ENCODE measurements at regions of chr3 and their contacts with region 1.

Region 1: GRCh38 chr3:56556908-56557830 is at the start of gene CCDC66:
- DNase-seq: peak; percentile 96
- H3K4me3 Mint-ChIP-seq: peak within 1 kb of the TSS; percentile 87
- H3K27ac Mint-ChIP-seq: peak within 1 kb of the TSS; percentile 92
- H3K4me1 Mint-ChIP-seq: peaks cover 24% of the 10 kb centered on the region
- H3K27me3 Mint-ChIP-seq: no peaks in the 10 kb centered on the region
- total RNA-seq, gene CCDC66: 21.0 to 29.4 TPM

Region 2: DNA sequence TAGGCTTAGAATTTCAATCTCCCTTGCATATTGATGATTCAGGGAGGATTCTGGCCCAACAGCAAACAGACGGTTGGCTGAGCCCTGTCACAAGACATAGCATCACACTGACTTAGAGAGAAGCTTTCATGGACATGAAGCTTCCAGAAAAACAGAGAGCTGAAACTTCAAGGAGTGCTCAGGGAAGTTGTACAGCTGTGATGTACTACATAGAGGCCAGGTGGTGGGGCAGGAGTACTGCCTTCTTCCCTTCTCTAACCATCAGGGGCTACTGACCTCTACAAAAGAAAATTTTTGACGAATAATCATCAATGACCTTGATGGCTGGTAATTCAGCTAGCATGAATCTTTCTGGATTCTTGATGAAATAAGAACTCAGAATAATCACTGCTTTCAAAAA is 467.4 kb before region 1 on chr3:
- CTCF ChIA-PET with region 1: no interaction called
- POLR2A ChIA-PET with region 1: no interaction called
- intact Hi-C with region 1: no loop called
- DNase-seq: no peak
- H3K4me3 Mint-ChIP-seq: no peak overlapping the region
- H3K27ac Mint-ChIP-seq: no peak overlapping the region
- H3K4me1 Mint-ChIP-seq: no peaks in the 10 kb centered on the region
- H3K27me3 Mint-ChIP-seq: no peaks in the 10 kb centered on the region

Region 3: DNA sequence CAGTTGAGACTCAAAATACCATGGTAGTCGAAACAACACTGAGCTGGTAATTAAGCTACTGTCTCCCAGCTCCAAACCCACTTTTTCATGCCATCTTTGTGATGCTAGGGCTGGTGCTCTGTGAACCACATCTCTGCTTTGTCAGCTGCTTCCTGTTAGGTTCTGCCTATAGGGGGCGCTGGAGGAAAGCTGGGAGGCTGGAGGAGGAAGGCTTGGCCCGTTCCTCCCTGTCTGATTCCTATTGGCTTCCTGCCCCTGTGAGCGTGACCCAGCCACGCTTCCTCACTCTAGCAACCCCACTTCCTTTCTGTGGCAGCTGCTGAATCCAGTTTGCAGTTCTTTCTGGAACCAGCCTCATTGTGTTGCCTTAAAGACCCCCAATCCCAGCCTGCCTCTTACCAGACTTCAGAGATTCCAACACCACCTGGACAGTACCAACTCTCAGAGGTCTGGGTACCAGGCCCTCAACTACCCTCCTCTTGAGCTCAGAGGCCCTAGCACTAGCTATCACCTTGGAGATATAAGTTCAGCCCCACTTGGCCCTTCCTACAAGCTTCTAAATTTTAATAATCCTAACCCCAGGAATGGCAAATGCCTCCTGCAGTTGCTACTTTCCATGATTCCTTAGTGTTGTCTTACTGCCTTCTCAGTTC is 209.8 kb before region 1 on chr3:
- CTCF ChIA-PET with region 1: no interaction called
- POLR2A ChIA-PET with region 1: no interaction called
- intact Hi-C with region 1: no loop called
- DNase-seq: peak; percentile 54
- H3K4me3 Mint-ChIP-seq: no peak overlapping the region
- H3K27ac Mint-ChIP-seq: no peak overlapping the region
- H3K4me1 Mint-ChIP-seq: no peaks in the 10 kb centered on the region
- H3K27me3 Mint-ChIP-seq: no peaks in the 10 kb centered on the region

Region 4: GRCh38 chr3:56593455-56594158 is 36.4 kb after region 1 on chr3:
- CTCF ChIA-PET with region 1: no interaction called
- POLR2A ChIA-PET with region 1: no interaction called
- intact Hi-C with region 1: loop called (anchors 2 kb)
- DNase-seq: peak; percentile 64
- H3K4me3 Mint-ChIP-seq: peak overlapping the region; percentile 4
- H3K27ac Mint-ChIP-seq: peak overlapping the region; percentile 87
- H3K4me1 Mint-ChIP-seq: peaks cover 58% of the 10 kb centered on the region
- H3K27me3 Mint-ChIP-seq: no peaks in the 10 kb centered on the region

Region 5: DNA sequence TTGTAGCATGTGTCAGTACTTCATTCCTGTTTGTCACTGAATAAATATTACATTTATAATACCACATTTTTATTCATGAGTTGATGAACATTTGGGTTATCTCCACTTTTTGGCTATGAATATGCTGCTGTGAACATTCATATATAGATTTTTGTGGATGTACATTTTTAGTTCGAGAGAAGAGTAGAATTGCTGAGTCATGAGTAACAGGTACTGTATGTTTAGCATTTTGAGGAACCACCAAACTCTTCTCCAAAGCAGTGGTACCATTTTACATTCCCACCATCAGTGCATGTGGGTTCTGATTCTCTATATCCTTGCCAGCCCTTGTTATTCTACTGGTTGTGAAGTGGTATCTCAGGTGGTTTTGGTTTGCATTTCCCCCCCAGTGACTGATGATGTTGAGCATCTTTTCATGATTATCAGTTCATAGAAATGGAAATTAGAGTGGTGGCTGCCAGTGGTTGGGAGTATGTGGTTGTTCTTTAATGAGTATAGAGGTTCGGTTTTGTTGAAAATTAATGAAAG is 59.4 kb after region 1 on chr3:
- CTCF ChIA-PET with region 1: no interaction called
- POLR2A ChIA-PET with region 1: no interaction called
- intact Hi-C with region 1: loop called (anchors 5 kb)
- DNase-seq: no peak
- H3K4me3 Mint-ChIP-seq: no peak overlapping the region
- H3K27ac Mint-ChIP-seq: peak overlapping the region; percentile 54
- H3K4me1 Mint-ChIP-seq: peaks cover 36% of the 10 kb centered on the region
- H3K27me3 Mint-ChIP-seq: no peaks in the 10 kb centered on the region

Region 6: DNA sequence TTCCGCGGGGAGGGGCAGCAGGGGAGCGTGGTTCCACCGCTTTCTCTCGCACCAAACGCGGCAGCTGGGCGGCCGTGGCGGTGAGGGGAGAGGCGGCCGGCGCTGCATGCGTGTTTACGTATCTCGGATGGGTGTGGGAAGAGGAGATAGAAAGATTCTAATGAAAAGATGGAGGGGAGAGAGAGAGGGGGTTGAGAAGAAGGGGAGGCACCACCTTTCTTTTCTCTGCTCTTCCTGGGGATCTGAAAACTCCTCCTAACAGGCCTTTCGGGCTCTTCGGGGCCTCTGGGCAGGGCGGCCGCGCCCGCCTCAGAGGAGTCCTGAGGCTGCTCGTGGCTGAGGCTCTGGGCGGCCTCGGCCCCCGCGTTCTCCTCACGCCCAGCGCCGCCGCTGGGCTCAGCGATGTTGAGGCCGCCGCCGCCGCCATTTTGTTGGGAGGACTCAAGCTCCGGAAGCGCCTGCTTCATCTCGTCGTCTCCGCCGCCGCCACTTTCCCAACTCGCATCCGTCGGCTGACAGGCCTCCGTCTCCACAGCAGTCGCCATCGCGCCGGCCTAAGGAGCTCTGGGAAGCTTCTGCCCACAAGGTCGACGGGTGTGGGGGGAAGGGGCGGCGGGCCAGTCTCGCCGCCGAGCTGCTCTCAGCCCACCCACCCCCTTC is 125.4 kb after region 1 on chr3:
- CTCF ChIA-PET with region 1: no interaction called
- POLR2A ChIA-PET with region 1: interaction called, 5 read pairs
- intact Hi-C with region 1: loop called (anchors 1 kb)
- DNase-seq: peak; percentile 83
- H3K4me3 Mint-ChIP-seq: peak overlapping the region; percentile 97
- H3K27ac Mint-ChIP-seq: peak overlapping the region; percentile 97
- H3K4me1 Mint-ChIP-seq: peaks cover 37% of the 10 kb centered on the region
- H3K27me3 Mint-ChIP-seq: no peaks in the 10 kb centered on the region